CD8-positive, alpha-beta T cell (primary cell): ENCODE measurements at regions of chr2 and their contacts with region 1.

Region 1: GRCh38 chr2:54522624-54523281 is 66.6 kb downstream of the SPTBN1 start:
- DNase-seq: peak; percentile 25 to 89 (median 64)
- ATAC-seq: peak; percentile 99
- H3K4me3 ChIP-seq: no peak overlapping the region
- H3K4me3 Mint-ChIP-seq: no peak overlapping the region
- H3K27ac ChIP-seq: no peak overlapping the region
- H3K27ac Mint-ChIP-seq: no peak overlapping the region
- H3K4me1 ChIP-seq: no peaks in the 10 kb centered on the region
- H3K4me1 Mint-ChIP-seq: peaks cover 8% of the 10 kb centered on the region
- H3K27me3 ChIP-seq: no peaks in the 10 kb centered on the region
- H3K27me3 Mint-ChIP-seq: peaks cover 12% of the 10 kb centered on the region
- CTCF ChIP-seq: peak; percentile 78

Region 2: DNA sequence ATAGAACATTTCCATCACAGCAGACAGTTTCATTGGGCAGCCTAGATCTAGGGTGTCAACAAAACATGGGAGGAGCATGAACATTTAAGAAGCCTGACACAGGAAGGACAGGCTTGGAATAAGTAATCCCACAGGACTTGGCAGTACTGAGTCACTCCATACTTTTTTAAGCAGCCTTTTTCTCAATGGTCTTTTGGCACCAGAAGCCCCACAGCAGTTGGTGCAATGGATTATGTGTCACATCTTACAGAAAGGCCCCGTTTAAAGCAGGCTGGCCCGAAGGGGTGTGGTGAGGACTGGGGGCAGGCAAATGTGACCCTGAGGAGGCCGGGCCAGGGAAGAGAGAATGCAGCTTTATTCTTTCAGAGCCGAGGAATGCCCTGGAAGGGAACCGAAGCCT is 40.0 kb before region 1 on chr2:
- CTCF ChIA-PET with region 1: no interaction called
- POLR2A ChIA-PET with region 1: no interaction called
- intact Hi-C with region 1: no loop called
- DNase-seq: no peak
- ATAC-seq: no peak
- H3K4me3 ChIP-seq: no peak overlapping the region
- H3K4me3 Mint-ChIP-seq: no peak overlapping the region
- H3K27ac ChIP-seq: no peak overlapping the region
- H3K27ac Mint-ChIP-seq: no peak overlapping the region
- H3K4me1 ChIP-seq: no peaks in the 10 kb centered on the region
- H3K4me1 Mint-ChIP-seq: no peaks in the 10 kb centered on the region
- H3K27me3 ChIP-seq: no peaks in the 10 kb centered on the region
- H3K27me3 Mint-ChIP-seq: no peaks in the 10 kb centered on the region
- CTCF ChIP-seq: no peak

Region 3: DNA sequence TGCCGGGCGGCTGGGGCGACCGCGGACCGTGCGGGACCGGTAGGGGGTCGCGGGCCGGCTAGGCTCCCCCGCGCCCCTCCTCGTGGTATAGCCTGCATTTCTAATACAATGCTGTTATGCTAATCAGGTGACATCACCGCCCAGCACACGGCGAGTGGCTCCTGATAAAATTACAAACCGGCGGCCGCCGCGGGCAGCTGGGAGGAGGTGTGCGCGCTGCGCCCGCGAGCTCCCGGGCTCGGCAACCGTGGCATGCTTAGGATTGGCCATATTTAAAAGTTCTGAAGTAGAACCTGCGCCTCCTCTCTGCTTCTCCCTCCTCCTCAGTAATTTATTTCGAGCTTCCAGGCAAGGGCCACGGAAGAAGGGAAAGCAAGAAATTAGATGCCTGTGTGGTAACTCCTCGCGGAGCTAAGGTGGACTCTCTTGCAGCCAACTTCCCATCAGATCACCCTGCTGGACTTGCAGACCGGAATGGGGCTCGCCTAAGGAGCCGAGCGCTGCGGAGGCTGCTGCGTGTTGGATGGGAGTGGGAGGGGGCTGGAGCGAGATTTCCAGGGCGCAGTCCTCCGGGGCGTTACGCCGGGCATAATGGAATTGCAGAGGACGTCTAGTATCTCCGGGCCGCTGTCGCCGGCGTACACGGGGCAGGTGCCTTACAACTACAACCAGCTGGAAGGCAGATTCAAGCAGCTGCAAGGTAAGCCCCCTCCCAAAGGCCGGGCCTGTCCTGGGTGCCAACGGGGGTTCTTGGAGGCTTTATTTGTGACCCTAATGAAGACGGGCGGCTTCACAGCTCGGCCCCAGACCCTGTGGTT is 35.6 kb after region 1 on chr2:
- CTCF ChIA-PET with region 1: interaction called, 24 read pairs
- POLR2A ChIA-PET with region 1: no interaction called
- intact Hi-C with region 1: loop called (anchors 1 to 5 kb)
- DNase-seq: peak; percentile 43 to 85 (median 69)
- ATAC-seq: peak; percentile 67
- H3K4me3 ChIP-seq: peak overlapping the region; percentile 92 to 94
- H3K4me3 Mint-ChIP-seq: peak overlapping the region; percentile 98
- H3K27ac ChIP-seq: peak overlapping the region; percentile 81 to 82
- H3K27ac Mint-ChIP-seq: peak overlapping the region; percentile 93
- H3K4me1 ChIP-seq: peaks cover 35% of the 10 kb centered on the region
- H3K4me1 Mint-ChIP-seq: peaks cover 64% of the 10 kb centered on the region
- H3K27me3 ChIP-seq: no peaks in the 10 kb centered on the region
- H3K27me3 Mint-ChIP-seq: no peaks in the 10 kb centered on the region
- CTCF ChIP-seq: no peak

Region 4: DNA sequence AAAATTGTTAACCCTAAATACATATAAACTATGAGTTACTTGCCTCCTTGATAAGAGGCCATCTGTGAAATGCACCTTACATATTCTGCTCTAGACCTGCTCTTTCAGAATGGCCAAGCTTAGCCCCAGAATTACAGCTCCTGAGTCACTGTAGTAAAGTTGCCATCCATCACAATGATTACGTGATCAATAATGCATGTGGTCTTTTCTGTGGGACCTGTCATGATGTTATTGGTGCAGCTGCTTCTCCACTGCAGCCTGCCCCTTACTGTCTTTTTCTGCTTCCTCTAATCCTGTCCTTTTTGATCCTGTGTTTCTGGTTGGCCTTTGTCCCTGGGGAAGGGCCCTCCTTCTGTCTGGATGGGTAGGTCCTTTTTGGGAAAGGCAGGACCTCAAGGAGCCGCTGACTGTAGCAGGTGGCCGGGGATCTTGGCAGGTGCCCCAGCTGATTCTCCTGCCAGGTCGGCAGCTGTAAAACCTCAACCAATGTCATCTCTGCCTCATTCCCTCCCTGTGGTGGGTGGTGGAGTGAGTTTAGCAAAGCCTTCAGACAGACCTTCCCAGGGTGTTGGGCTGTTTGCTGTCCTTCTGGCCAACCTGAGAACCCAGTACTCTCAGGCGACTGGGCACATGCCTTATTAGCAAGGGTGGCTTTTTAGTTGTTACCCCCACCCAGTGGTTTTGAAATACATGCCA is 74.5 kb after region 1 on chr2:
- CTCF ChIA-PET with region 1: interaction called, 19 read pairs
- POLR2A ChIA-PET with region 1: no interaction called
- intact Hi-C with region 1: loop called in 1 of 2 experiments (anchors 2 kb)
- DNase-seq: peak in 3 of 9 experiments; percentile 29 to 61 (median 37)
- ATAC-seq: peak; percentile 27
- H3K4me3 ChIP-seq: peak overlapping the region in 1 of 2 experiments; percentile 7
- H3K4me3 Mint-ChIP-seq: peak overlapping the region; percentile 80
- H3K27ac ChIP-seq: peak overlapping the region; percentile 35 to 71
- H3K27ac Mint-ChIP-seq: peak overlapping the region; percentile 95
- H3K4me1 ChIP-seq: peaks cover 89% of the 10 kb centered on the region
- H3K4me1 Mint-ChIP-seq: peaks cover 94% of the 10 kb centered on the region
- H3K27me3 ChIP-seq: no peaks in the 10 kb centered on the region
- H3K27me3 Mint-ChIP-seq: no peaks in the 10 kb centered on the region
- CTCF ChIP-seq: no peak

Region 5: GRCh38 chr2:54618646-54619565 is 96.2 kb after region 1 on chr2:
- CTCF ChIA-PET with region 1: interaction called, 25 read pairs
- POLR2A ChIA-PET with region 1: no interaction called
- intact Hi-C with region 1: loop called (anchors 2 kb)
- DNase-seq: no peak
- ATAC-seq: no peak
- H3K4me3 ChIP-seq: no peak overlapping the region
- H3K4me3 Mint-ChIP-seq: no peak overlapping the region
- H3K27ac ChIP-seq: no peak overlapping the region
- H3K27ac Mint-ChIP-seq: peak overlapping the region; percentile 46
- H3K4me1 ChIP-seq: peaks cover 15% of the 10 kb centered on the region
- H3K4me1 Mint-ChIP-seq: peaks cover 36% of the 10 kb centered on the region
- H3K27me3 ChIP-seq: no peaks in the 10 kb centered on the region
- H3K27me3 Mint-ChIP-seq: no peaks in the 10 kb centered on the region
- CTCF ChIP-seq: no peak

Region 6: GRCh38 chr2:54657664-54658083 is 134.9 kb after region 1 on chr2:
- CTCF ChIA-PET with region 1: interaction called, 39 read pairs
- POLR2A ChIA-PET with region 1: no interaction called
- intact Hi-C with region 1: no loop called
- DNase-seq: peak in 4 of 9 experiments; percentile 25 to 38 (median 34)
- ATAC-seq: peak; percentile 34
- H3K4me3 ChIP-seq: no peak overlapping the region
- H3K4me3 Mint-ChIP-seq: no peak overlapping the region
- H3K27ac ChIP-seq: no peak overlapping the region
- H3K27ac Mint-ChIP-seq: no peak overlapping the region
- H3K4me1 ChIP-seq: no peaks in the 10 kb centered on the region
- H3K4me1 Mint-ChIP-seq: no peaks in the 10 kb centered on the region
- H3K27me3 ChIP-seq: no peaks in the 10 kb centered on the region
- H3K27me3 Mint-ChIP-seq: no peaks in the 10 kb centered on the region
- CTCF ChIP-seq: peak; percentile 28

Region 7: GRCh38 chr2:54704688-54705605 is 182.2 kb after region 1 on chr2:
- CTCF ChIA-PET with region 1: interaction called, 162 read pairs
- POLR2A ChIA-PET with region 1: interaction called, 4 read pairs
- intact Hi-C with region 1: loop called (anchors 1 kb)
- DNase-seq: peak in 2 of 9 experiments; percentile 71 to 78
- ATAC-seq: peak; percentile 66
- H3K4me3 ChIP-seq: no peak overlapping the region
- H3K4me3 Mint-ChIP-seq: no peak overlapping the region
- H3K27ac ChIP-seq: no peak overlapping the region
- H3K27ac Mint-ChIP-seq: no peak overlapping the region
- H3K4me1 ChIP-seq: no peaks in the 10 kb centered on the region
- H3K4me1 Mint-ChIP-seq: no peaks in the 10 kb centered on the region
- H3K27me3 ChIP-seq: peaks cover 11% of the 10 kb centered on the region in 2 experiments
- H3K27me3 Mint-ChIP-seq: peaks cover 16% of the 10 kb centered on the region
- CTCF ChIP-seq: peak; percentile 81

Region 8: DNA sequence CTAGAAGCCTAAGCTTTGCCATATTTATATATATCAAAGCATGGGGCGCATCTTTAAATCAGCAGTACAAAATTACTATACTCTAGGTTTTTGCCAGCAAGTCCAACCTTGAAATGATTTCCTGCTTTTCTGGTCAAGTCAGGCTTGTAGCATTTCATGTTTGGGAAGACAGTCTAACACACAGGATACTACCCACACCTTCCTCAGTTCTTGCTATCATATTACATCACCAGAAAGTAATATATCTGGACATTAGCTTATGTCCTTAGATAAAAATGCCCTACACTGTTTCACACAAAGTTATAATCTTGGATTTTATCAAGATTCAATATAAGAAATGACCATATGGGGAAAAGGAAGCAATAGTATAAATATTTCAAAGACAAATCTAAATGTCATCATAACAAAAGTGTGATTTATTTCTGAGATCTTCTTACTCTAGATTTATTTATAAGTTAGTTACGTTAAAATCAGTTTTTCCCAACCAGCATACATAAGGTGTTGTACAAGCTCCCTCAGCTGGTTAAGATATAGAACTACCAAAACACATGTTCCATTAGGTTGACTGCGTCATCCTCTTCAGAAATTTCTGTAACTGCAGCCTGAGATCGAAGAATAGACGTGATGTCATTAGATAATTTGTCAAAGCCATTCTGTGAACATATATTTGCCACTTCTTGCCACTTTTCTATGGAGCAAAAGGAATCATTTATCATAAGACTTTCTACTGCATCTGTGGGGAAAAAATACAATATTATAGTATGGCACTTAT is 652.7 kb after region 1 on chr2:
- CTCF ChIA-PET with region 1: interaction called, 3 read pairs
- POLR2A ChIA-PET with region 1: no interaction called
- intact Hi-C with region 1: loop called (anchors 2 to 10 kb)
- DNase-seq: peak in 2 of 9 experiments; percentile 58 to 70
- ATAC-seq: peak; percentile 91
- H3K4me3 ChIP-seq: no peak overlapping the region
- H3K4me3 Mint-ChIP-seq: no peak overlapping the region
- H3K27ac ChIP-seq: no peak overlapping the region
- H3K27ac Mint-ChIP-seq: no peak overlapping the region
- H3K4me1 ChIP-seq: no peaks in the 10 kb centered on the region
- H3K4me1 Mint-ChIP-seq: peaks cover 3% of the 10 kb centered on the region
- H3K27me3 ChIP-seq: no peaks in the 10 kb centered on the region
- H3K27me3 Mint-ChIP-seq: no peaks in the 10 kb centered on the region
- CTCF ChIP-seq: peak; percentile 67

Region 9: DNA sequence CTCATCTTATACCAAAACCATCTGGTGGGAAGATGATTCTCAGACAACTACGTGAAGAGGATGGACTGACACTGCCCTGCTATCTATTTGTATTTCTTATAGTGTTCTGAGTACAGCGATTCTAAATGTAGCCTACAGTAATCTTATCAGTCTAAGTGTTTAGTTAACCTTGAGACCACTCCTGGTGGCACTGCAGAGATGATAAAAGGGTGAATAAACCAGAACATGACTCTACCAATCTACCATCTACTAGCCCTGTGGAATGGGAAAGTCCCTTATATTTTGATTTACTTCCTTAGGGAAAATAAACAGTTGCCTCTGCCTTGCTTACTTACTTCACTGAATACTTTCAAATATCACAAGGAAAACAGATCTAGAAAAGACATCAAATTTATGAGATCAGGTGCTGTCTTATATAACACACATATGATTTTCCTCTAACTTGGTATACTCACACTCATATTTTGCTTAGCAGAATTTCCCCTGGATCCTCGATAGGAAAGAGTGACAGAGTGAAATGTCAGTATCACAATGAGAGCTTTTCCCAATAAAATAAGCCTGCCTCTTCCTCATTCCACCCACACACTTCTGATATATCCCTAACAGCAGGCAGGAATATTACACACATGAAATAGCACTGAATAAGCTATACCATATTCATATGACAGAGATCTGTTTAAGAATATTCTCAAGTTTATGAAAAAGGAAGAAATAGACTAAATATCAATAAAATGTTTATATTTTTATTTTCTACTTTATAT is 804.9 kb after region 1 on chr2:
- CTCF ChIA-PET with region 1: no interaction called
- POLR2A ChIA-PET with region 1: no interaction called
- intact Hi-C with region 1: no loop called
- DNase-seq: no peak
- ATAC-seq: no peak
- H3K4me3 ChIP-seq: no peak overlapping the region
- H3K4me3 Mint-ChIP-seq: no peak overlapping the region
- H3K27ac ChIP-seq: no peak overlapping the region
- H3K27ac Mint-ChIP-seq: no peak overlapping the region
- H3K4me1 ChIP-seq: no peaks in the 10 kb centered on the region
- H3K4me1 Mint-ChIP-seq: no peaks in the 10 kb centered on the region
- H3K27me3 ChIP-seq: no peaks in the 10 kb centered on the region
- H3K27me3 Mint-ChIP-seq: no peaks in the 10 kb centered on the region
- CTCF ChIP-seq: no peak